Calu3 (cell line): ENCODE measurements at regions of chr2 and their contacts with region 1.

Region 1: GRCh38 chr2:36561237-36561944 is 36.6 kb downstream of the FEZ2 start:
- DNase-seq: peak; percentile 64
- H3K4me3 Mint-ChIP-seq: peak overlapping the region; percentile 43
- H3K27ac Mint-ChIP-seq: peak overlapping the region; percentile 98
- H3K4me1 Mint-ChIP-seq: peaks cover 38% of the 10 kb centered on the region
- H3K27me3 Mint-ChIP-seq: no peaks in the 10 kb centered on the region
- CTCF ChIP-seq: no peak

Region 2: GRCh38 chr2:36178384-36178783 is 383.0 kb before region 1 on chr2:
- CTCF ChIA-PET with region 1: no interaction called
- intact Hi-C with region 1: loop called (anchors 5 kb)
- DNase-seq: no peak
- H3K4me3 Mint-ChIP-seq: no peak overlapping the region
- H3K27ac Mint-ChIP-seq: no peak overlapping the region
- H3K4me1 Mint-ChIP-seq: peaks cover 33% of the 10 kb centered on the region
- H3K27me3 Mint-ChIP-seq: no peaks in the 10 kb centered on the region
- CTCF ChIP-seq: no peak

Region 3: GRCh38 chr2:36486546-36487044 is 74.8 kb before region 1 on chr2:
- CTCF ChIA-PET with region 1: no interaction called
- intact Hi-C with region 1: loop called (anchors 5 kb)
- DNase-seq: no peak
- H3K4me3 Mint-ChIP-seq: no peak overlapping the region
- H3K27ac Mint-ChIP-seq: peak overlapping the region; percentile 83
- H3K4me1 Mint-ChIP-seq: peaks cover 65% of the 10 kb centered on the region
- H3K27me3 Mint-ChIP-seq: no peaks in the 10 kb centered on the region
- CTCF ChIP-seq: no peak

Region 4: DNA sequence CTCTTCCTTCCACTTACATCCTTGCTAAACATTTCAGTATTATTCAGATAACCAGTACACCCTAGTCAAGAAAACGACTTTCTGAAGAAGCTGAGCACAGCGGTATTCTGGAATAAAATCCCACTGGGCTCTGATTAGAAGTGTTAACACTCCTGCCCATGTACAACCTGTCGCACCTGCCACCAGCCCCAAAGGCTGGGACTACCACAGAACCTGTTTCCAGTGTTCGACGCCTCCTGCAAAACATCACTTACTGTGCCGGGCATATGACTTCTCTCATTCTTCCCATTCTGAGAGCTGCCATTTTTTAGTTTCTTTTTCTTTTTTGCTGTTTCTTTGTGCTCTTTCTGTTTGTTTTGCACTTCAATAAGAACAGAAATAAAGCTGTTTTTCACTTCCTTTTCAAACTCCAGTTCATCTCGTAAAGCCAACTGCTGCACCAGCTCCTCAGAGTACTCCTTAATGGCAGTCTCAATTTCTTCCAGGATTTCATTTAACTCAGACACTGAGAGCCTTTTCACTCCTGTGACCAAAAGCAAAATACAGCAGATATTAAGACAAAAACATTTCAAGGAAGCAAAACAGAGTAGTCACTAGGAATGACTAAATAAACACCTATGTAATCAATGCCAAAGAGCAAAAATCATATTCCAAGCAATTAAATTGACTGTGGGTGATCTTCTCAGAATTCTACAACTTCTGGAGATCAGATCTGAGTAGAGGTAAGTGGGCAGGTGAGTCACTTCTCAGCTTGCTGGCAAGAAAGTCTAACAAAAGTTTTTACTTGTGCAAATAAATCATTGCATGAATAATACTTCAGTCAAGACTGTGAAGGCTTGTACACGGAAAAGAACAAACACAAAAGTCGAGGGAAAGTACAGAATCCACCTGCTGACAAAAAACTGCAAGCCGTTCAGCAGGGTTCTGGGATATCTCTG is 17.2 kb after region 1 on chr2:
- CTCF ChIA-PET with region 1: no interaction called
- intact Hi-C with region 1: loop called (anchors 2 kb)
- DNase-seq: peak; percentile 8
- H3K4me3 Mint-ChIP-seq: peak overlapping the region; percentile 29
- H3K27ac Mint-ChIP-seq: peak overlapping the region; percentile 85
- H3K4me1 Mint-ChIP-seq: peaks cover 20% of the 10 kb centered on the region
- H3K27me3 Mint-ChIP-seq: no peaks in the 10 kb centered on the region
- CTCF ChIP-seq: no peak

Region 5: GRCh38 chr2:36663851-36664695 is 102.7 kb after region 1 on chr2:
- CTCF ChIA-PET with region 1: no interaction called
- intact Hi-C with region 1: loop called (anchors 5 kb)
- DNase-seq: peak; percentile 45
- H3K4me3 Mint-ChIP-seq: no peak overlapping the region
- H3K27ac Mint-ChIP-seq: no peak overlapping the region
- H3K4me1 Mint-ChIP-seq: no peaks in the 10 kb centered on the region
- H3K27me3 Mint-ChIP-seq: no peaks in the 10 kb centered on the region
- CTCF ChIP-seq: peak; percentile 62

Region 6: DNA sequence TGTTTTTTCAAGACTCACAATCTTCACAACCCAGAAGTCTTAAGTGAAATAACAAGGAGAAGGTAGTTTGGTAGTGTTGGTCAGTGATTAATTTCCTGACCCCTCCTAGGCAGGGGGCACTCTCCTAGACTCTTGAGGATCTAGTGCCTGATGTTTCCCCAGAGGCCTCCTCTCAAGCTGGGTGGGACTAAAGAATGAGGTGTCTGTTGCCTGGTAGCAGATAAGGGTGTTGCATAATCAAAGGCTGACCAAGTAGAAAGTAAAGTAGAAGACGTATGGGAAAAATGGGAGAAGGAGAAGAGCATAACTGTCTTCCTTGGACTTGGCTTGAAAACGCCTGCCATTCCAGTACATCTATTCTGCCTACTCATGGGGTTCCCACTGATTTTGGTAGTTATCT is 172.9 kb after region 1 on chr2:
- CTCF ChIA-PET with region 1: no interaction called
- intact Hi-C with region 1: no loop called
- DNase-seq: no peak
- H3K4me3 Mint-ChIP-seq: no peak overlapping the region
- H3K27ac Mint-ChIP-seq: no peak overlapping the region
- H3K4me1 Mint-ChIP-seq: no peaks in the 10 kb centered on the region
- H3K27me3 Mint-ChIP-seq: peaks cover 29% of the 10 kb centered on the region
- CTCF ChIP-seq: no peak

Region 7: GRCh38 chr2:36785179-36785795 is 223.9 kb after region 1 on chr2:
- CTCF ChIA-PET with region 1: no interaction called
- intact Hi-C with region 1: loop called (anchors 10 kb)
- DNase-seq: peak; percentile 77
- H3K4me3 Mint-ChIP-seq: no peak overlapping the region
- H3K27ac Mint-ChIP-seq: no peak overlapping the region
- H3K4me1 Mint-ChIP-seq: no peaks in the 10 kb centered on the region
- H3K27me3 Mint-ChIP-seq: peaks cover 66% of the 10 kb centered on the region
- CTCF ChIP-seq: peak; percentile 95